Activated T-helper 1 cell treated with anti-CD3 and anti-CD28 coated beads, Interleukin-12 subunit alpha, Interleukin-12 subunit beta, Interleukin-2, Interleukin-4 antibody, amounts not matched to agents 30 ng/mL and 10 ng/mL and 1 ng/mL, durations not matched to agents 14 hours and 24 hours and 36 hours (primary cell): ENCODE measurements at regions of chrX and their contacts with region 1.

Region 1: DNA sequence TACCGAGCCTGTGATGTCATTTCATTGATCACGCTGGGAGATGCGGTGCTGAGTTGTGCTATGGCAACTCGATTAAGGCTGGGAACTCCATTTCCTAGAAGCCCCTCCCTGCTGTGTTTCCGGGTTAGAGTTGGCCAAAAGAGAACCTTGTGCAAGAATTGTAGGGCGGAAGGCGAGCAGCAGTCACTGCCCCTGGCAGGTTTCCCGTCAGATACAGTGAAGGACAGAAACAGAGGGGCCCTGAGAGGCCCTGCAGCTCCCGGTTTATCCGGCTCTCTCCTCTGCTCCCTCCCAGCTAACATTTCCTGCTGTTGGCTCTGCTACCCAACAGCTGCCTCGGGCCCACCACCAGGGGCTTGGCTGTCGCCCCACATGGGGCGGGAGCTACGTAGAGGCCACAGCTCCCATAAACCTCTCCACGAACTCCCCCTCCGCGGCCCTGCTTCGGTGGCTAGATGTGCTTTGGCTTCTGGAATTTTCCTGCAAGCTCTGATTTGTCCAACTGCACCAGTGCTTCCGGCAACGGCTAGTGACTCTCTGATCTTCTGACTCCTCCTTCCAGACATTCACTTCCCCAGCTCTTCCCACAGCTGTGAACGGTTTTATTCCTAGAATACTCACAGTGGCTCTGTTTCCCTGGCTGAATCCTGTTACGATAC is 74.9 kb upstream of the USP9X start:
- DNase-seq: peak; percentile 53
- H3K4me3 Mint-ChIP-seq: peak overlapping the region; percentile 76
- H3K27ac Mint-ChIP-seq: peak overlapping the region; percentile 86
- H3K4me1 Mint-ChIP-seq: peaks cover 24% of the 10 kb centered on the region
- H3K27me3 Mint-ChIP-seq: no peaks in the 10 kb centered on the region

Region 2: DNA sequence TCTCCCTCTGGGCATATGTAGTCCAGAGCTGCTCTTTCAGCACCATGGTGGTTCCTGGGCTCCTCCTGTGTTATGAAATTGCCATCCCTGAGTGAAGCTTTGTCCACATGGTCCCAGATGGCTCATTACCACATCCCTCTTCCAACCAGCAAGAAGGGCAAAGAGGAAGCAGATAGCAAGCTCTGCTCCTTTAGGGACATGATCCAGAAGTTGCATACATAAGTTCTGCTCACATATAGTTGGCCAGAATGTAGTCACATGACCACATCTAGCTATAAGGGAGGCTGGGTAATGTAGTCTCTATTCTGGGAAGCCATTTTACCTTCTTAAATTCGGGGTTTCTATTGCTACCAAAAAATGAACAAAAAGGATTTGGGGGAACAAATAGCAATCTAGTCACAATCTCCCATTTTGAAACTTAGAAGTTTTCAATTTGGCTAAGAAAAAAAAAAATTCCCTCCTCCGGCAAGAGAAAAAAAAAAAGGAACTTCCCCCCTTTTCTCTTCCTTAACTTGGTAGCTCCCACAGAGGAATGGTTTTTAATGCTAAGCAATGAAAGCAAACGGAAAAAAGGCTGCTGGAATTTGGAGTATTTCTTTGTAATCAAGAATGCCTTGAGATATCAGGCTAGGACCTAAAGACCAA is 13.3 kb before region 1 on chrX:
- intact Hi-C with region 1: loop called (anchors 2 kb)
- DNase-seq: no peak
- H3K4me3 Mint-ChIP-seq: no peak overlapping the region
- H3K27ac Mint-ChIP-seq: no peak overlapping the region
- H3K4me1 Mint-ChIP-seq: no peaks in the 10 kb centered on the region
- H3K27me3 Mint-ChIP-seq: no peaks in the 10 kb centered on the region